B cell (primary cell): ENCODE measurements at regions of chr2 and their contacts with region 1.

Region 1: GRCh38 chr2:197293252-197294007 is 17.1 kb downstream of the ANKRD44 start:
- DNase-seq: peak; percentile 29
- ATAC-seq: peak; percentile 31
- H3K4me3 ChIP-seq: peak overlapping the region; percentile 14 to 69 (median 50)
- H3K4me3 Mint-ChIP-seq: peak overlapping the region; percentile 86
- H3K27ac ChIP-seq: peak overlapping the region; percentile 69 to 86
- H3K27ac Mint-ChIP-seq: peak overlapping the region; percentile 84
- H3K4me1 ChIP-seq: peaks cover 72 to 88% of the 10 kb centered on the region in 2 donors
- H3K4me1 Mint-ChIP-seq: peaks cover 81% of the 10 kb centered on the region
- H3K27me3 ChIP-seq: no peaks in the 10 kb centered on the region
- H3K27me3 Mint-ChIP-seq: no peaks in the 10 kb centered on the region
- CTCF ChIP-seq: no peak

Region 2: DNA sequence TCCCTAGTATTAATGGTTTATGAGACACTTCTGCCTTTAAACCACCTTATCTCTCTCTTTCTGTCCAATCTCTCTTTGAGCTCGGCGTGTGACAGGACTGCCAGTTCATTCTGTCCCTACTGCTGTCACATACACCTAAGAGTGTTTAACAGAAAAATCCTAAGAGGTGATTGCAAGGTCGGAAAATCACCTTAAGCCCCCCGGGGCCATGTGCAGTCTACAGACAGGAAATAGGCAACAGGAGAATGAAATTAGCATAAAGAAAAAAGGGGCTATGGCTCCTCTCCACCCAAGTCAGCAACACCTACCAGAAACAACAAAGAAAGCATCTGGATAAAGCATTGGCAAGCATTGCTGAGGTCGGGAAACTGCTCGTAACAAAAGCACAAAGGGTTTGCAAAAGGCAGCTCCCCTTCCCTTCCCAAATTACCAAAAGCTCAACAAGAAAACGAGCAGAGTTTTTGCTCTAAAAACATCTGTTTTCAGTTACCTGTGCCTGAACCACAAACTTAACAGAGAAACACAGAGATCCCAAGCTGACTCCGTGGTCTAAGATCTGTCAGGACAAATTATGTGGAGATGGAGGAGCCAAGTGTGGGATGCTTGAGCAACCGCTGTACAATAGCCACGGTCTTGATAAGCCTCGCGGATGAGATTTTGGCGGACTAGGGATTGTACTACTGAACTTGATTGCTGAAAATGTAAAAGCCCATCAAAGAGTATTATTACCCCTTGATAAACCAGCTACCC is 13.3 kb before region 1 on chr2:
- CTCF ChIA-PET with region 1: interaction called, 4 read pairs
- POLR2A ChIA-PET with region 1: interaction called, 3 read pairs
- intact Hi-C with region 1: loop called (anchors 2 kb)
- DNase-seq: no peak
- ATAC-seq: peak; percentile 28
- H3K4me3 ChIP-seq: peak overlapping the region in 1 of 5 experiments; percentile 19
- H3K4me3 Mint-ChIP-seq: peak overlapping the region; percentile 59
- H3K27ac ChIP-seq: peak overlapping the region in 1 of 2 donors; percentile 62
- H3K27ac Mint-ChIP-seq: peak overlapping the region; percentile 58
- H3K4me1 ChIP-seq: peaks cover 73 to 74% of the 10 kb centered on the region in 2 donors
- H3K4me1 Mint-ChIP-seq: peaks cover 78% of the 10 kb centered on the region
- H3K27me3 ChIP-seq: no peaks in the 10 kb centered on the region
- H3K27me3 Mint-ChIP-seq: no peaks in the 10 kb centered on the region
- CTCF ChIP-seq: no peak